CD8-positive, alpha-beta T cell (primary cell): ENCODE measurements at regions of chr17 and their contacts with region 1.

Region 1: DNA sequence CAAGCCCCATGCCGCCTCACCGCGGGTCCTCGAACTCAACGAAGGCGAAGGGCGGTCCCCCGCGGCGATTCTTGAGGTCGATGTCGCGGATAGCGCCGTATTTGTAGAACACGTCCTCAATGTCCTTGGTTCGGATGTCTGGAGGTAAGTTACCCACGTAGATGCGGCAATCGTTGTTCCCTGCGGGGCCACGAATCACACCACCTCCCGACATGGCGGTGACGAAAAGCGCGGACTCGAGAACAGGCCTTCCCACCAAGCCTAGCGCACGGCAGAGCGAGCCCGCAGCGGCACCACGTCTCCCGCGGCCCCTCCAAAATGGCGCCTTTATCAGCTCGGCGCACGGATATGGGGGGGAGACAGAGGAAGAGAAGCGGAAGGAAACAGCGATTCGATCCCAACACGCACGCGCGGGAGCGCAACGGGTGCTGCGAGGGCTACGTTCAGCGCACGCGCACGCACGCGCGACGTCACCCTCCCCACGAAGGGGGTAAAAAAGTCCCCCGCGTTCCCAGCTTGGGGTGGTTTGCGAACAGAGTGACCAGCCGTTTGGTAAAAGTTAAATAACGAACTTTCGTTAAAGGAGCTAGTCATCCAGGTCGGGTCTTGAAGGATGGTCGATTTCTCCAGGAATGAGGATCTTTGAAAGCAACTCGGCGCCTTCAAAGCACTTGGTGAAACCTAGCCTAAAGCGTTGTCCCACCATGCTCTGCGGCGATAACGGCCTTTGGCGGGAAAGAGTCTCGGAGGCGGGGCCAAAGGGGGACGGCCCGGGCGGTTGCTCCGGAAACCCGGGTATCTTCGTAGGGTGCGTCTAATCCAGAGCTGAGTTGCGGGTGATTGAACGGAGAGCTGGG is at the start of gene SRSF1:
- DNase-seq: peak; percentile 93 to 100 (median 98)
- ATAC-seq: peak; percentile 86
- H3K4me3 ChIP-seq: peak within 1 kb of the TSS; percentile 90 to 100
- H3K4me3 Mint-ChIP-seq: peak within 1 kb of the TSS; percentile 100
- H3K27ac ChIP-seq: peak within 1 kb of the TSS; percentile 85 to 97
- H3K27ac Mint-ChIP-seq: peak within 1 kb of the TSS; percentile 100
- H3K4me1 ChIP-seq: peaks cover 36% of the 10 kb centered on the region
- H3K4me1 Mint-ChIP-seq: peaks cover 55% of the 10 kb centered on the region
- H3K27me3 ChIP-seq: no peaks in the 10 kb centered on the region
- H3K27me3 Mint-ChIP-seq: no peaks in the 10 kb centered on the region
- CTCF ChIP-seq: no peak
- total RNA-seq, gene SRSF1: 79.2 to 94.1 TPM

Region 2: DNA sequence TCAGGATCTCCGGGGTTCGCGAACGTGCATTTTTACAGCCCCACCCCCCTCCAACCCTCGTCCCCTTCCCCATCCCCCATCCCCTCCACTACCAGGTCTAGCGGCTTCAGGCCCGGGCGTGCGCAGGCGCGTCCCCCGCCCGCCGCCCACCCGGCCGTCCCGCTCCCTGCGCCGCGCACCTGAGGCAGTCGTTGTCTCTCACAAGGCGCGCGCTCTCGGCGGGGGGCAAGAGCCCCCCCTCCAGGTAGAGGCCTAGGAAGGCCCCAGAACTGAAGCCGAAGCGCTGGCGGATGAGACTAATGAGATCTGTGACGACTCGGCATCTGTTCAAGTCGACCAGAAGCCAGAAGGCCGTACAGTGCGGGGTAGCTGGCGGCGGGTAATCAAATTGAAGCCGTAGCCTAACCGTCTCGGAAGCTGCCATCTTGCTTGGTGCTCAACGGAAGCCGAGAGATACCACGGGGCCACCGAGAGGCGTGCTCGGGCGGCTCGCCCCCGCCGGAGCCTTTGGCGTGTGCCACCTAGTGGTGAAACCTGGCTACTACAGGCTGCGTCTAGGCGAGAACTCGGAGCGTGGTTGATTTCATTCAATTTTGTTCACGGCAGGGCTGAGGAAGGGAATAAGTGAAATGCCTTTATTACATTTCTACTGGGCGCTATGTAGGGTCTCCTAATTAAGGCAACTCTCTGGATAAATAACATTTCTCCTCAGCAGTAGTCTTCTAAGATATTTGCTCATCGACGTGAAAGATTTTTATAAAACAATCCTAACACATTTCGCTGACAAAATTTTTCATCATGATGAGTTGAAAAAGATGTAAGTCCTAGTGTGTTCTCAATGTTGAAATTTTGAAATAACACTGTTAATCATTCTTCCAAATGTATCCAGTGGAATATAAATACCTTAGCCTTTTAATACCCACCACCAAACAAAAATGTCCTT is 1046.3 kb before region 1 on chr17 and contains the start of gene COIL:
- CTCF ChIA-PET with region 1: no interaction called
- POLR2A ChIA-PET with region 1: no interaction called
- intact Hi-C with region 1: loop called (anchors 10 kb)
- DNase-seq: peak; percentile 85 to 96 (median 93)
- ATAC-seq: peak; percentile 98
- H3K4me3 ChIP-seq: peak within 1 kb of the TSS; percentile 65 to 89
- H3K4me3 Mint-ChIP-seq: peak within 1 kb of the TSS; percentile 89
- H3K27ac ChIP-seq: peak within 1 kb of the TSS; percentile 78 to 79
- H3K27ac Mint-ChIP-seq: peak within 1 kb of the TSS; percentile 96
- H3K4me1 ChIP-seq: peaks cover 22% of the 10 kb centered on the region
- H3K4me1 Mint-ChIP-seq: peaks cover 25% of the 10 kb centered on the region
- H3K27me3 ChIP-seq: no peaks in the 10 kb centered on the region
- H3K27me3 Mint-ChIP-seq: no peaks in the 10 kb centered on the region
- CTCF ChIP-seq: peak; percentile 99
- total RNA-seq, gene COIL: 24.1 to 24.3 TPM

Region 3: GRCh38 chr17:57849874-57850754 is 157.0 kb before region 1 on chr17 and contains the start of gene MRPS23:
- CTCF ChIA-PET with region 1: interaction called, 102 read pairs
- POLR2A ChIA-PET with region 1: interaction called, 16 read pairs
- intact Hi-C with region 1: loop called (anchors 1 kb)
- DNase-seq: peak; percentile 91 to 99 (median 95)
- ATAC-seq: peak; percentile 94
- H3K4me3 ChIP-seq: peak within 1 kb of the TSS; percentile 74 to 82
- H3K4me3 Mint-ChIP-seq: peak within 1 kb of the TSS; percentile 95
- H3K27ac ChIP-seq: peak within 1 kb of the TSS; percentile 88 to 91
- H3K27ac Mint-ChIP-seq: peak within 1 kb of the TSS; percentile 100
- H3K4me1 ChIP-seq: peaks cover 32% of the 10 kb centered on the region
- H3K4me1 Mint-ChIP-seq: peaks cover 44% of the 10 kb centered on the region
- H3K27me3 ChIP-seq: no peaks in the 10 kb centered on the region
- H3K27me3 Mint-ChIP-seq: no peaks in the 10 kb centered on the region
- CTCF ChIP-seq: no peak
- total RNA-seq, gene MRPS23: 16.2 to 17.2 TPM

Region 4: GRCh38 chr17:57927048-57927723 is 80.0 kb before region 1 on chr17:
- CTCF ChIA-PET with region 1: no interaction called
- POLR2A ChIA-PET with region 1: no interaction called
- intact Hi-C with region 1: no loop called
- DNase-seq: no peak
- ATAC-seq: no peak
- H3K4me3 ChIP-seq: no peak overlapping the region
- H3K4me3 Mint-ChIP-seq: no peak overlapping the region
- H3K27ac ChIP-seq: no peak overlapping the region
- H3K27ac Mint-ChIP-seq: no peak overlapping the region
- H3K4me1 ChIP-seq: no peaks in the 10 kb centered on the region
- H3K4me1 Mint-ChIP-seq: peaks cover 6% of the 10 kb centered on the region
- H3K27me3 ChIP-seq: peaks cover 0 to 2% of the 10 kb centered on the region in 2 experiments
- H3K27me3 Mint-ChIP-seq: peaks cover 6% of the 10 kb centered on the region
- CTCF ChIP-seq: no peak

Region 5: DNA sequence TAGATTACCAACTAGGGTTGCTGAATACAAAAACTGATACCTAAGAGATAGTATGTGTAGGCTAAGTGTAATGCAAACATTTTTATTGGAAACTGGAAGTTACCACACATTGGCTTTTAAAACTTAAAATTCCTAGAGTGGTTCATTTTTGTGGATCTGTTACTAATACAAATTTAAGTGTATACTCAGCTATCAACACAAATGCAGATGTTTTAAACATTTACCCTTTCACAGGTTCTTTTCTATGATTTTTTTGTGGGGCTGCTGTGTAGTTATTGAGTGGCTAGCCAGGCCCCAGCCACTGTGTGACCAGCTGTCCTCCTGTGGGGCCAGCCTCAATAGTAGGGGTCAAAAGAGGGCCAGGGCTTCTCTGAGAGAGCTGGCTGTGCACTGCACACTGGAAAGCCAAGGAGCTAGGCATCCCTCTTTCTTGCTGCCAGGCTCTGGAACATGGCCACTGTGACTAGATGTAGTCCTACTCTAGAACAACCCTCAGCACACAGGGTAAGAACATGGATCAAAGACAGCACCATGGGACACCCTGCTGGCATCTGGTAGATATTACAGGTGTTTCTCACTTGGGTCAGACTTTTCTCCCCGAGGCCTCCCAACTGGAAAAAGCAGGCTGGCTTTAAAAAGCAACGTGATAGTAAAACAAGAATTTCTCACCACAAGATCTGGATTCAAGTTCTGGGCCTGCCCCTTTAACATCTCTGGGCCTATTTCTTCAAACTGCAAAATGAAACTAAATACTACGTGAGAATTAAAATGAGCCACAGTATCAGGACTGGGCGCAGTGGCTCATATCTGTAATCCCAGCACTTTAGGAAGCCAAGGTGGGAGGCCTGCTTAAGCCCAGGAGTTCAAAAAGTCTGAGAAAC is 11.8 kb before region 1 on chr17:
- CTCF ChIA-PET with region 1: interaction called, 53 read pairs
- POLR2A ChIA-PET with region 1: interaction called, 28 read pairs
- intact Hi-C with region 1: loop called in 1 of 2 experiments (anchors 1 kb)
- DNase-seq: peak; percentile 13 to 81 (median 51)
- ATAC-seq: peak; percentile 92
- H3K4me3 ChIP-seq: no peak overlapping the region
- H3K4me3 Mint-ChIP-seq: peak overlapping the region; percentile 1
- H3K27ac ChIP-seq: peak overlapping the region in 1 of 2 experiments; percentile 43
- H3K27ac Mint-ChIP-seq: peak overlapping the region; percentile 72
- H3K4me1 ChIP-seq: peaks cover 13% of the 10 kb centered on the region
- H3K4me1 Mint-ChIP-seq: peaks cover 46% of the 10 kb centered on the region
- H3K27me3 ChIP-seq: no peaks in the 10 kb centered on the region
- H3K27me3 Mint-ChIP-seq: no peaks in the 10 kb centered on the region
- CTCF ChIP-seq: peak; percentile 56

Region 6: GRCh38 chr17:58219001-58219788 is 212.0 kb after region 1 on chr17 and contains the start of gene MKS1:
- CTCF ChIA-PET with region 1: no interaction called
- POLR2A ChIA-PET with region 1: interaction called, 3 read pairs
- intact Hi-C with region 1: loop called (anchors 1 to 2 kb)
- DNase-seq: peak; percentile 92 to 97 (median 95)
- ATAC-seq: peak; percentile 97
- H3K4me3 ChIP-seq: peak within 1 kb of the TSS; percentile 63 to 91
- H3K4me3 Mint-ChIP-seq: peak within 1 kb of the TSS; percentile 87
- H3K27ac ChIP-seq: peak within 1 kb of the TSS; percentile 82 to 90
- H3K27ac Mint-ChIP-seq: peak within 1 kb of the TSS; percentile 93
- H3K4me1 ChIP-seq: peaks cover 14% of the 10 kb centered on the region
- H3K4me1 Mint-ChIP-seq: peaks cover 23% of the 10 kb centered on the region
- H3K27me3 ChIP-seq: no peaks in the 10 kb centered on the region
- H3K27me3 Mint-ChIP-seq: peaks cover 2% of the 10 kb centered on the region
- CTCF ChIP-seq: peak; percentile 67
- total RNA-seq, gene MKS1: 4.6 to 4.9 TPM

Region 7: GRCh38 chr17:58352014-58352842 is 345.1 kb after region 1 on chr17 and contains the start of gene SUPT4H1:
- CTCF ChIA-PET with region 1: no interaction called
- POLR2A ChIA-PET with region 1: no interaction called
- intact Hi-C with region 1: loop called (anchors 2 to 5 kb)
- DNase-seq: peak; percentile 81 to 97 (median 91)
- ATAC-seq: peak; percentile 88
- H3K4me3 ChIP-seq: peak within 1 kb of the TSS; percentile 69 to 70
- H3K4me3 Mint-ChIP-seq: peak within 1 kb of the TSS; percentile 100
- H3K27ac ChIP-seq: peak within 1 kb of the TSS; percentile 75 to 81
- H3K27ac Mint-ChIP-seq: peak within 1 kb of the TSS; percentile 100
- H3K4me1 ChIP-seq: peaks cover 46% of the 10 kb centered on the region
- H3K4me1 Mint-ChIP-seq: peaks cover 60% of the 10 kb centered on the region
- H3K27me3 ChIP-seq: no peaks in the 10 kb centered on the region
- H3K27me3 Mint-ChIP-seq: no peaks in the 10 kb centered on the region
- CTCF ChIP-seq: no peak
- total RNA-seq, gene SUPT4H1: 45.2 to 59.7 TPM

Region 8: DNA sequence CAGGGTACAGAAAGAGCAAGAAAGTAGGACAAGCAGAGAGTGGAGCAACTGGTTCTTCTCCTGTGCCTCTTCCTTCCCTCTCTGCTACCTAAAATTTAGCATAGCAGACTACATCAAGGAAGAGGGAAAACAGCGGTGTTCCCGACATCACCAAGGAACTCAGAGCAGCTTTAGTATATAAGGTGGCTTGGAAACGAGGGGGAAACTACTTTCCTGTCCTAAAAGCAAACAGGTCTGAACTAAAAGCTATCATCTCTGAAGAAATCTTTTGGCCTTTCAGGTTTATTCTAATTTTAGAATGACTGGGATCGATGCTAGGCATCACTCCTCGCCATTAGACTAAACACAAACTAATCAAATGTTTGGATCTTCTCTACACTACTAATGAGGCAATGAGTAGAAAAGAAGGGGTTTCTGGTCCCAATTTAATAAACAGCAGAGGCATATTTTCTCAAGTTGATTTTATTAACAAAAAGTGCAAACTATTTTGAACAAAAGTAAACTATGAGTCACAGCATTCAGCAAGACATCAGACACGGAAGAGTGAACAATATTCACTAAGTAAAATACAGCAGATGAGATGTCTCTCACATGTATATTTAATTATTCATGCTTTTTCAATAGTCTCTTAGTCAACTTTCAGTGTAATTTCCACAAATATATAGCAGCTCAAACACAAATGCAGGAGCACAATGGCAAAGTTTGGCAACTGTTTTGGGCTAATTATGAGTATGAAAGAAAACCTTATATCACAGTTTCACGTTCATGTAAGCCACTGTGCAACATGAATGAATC is 990.8 kb after region 1 on chr17:
- CTCF ChIA-PET with region 1: no interaction called
- POLR2A ChIA-PET with region 1: no interaction called
- intact Hi-C with region 1: loop called in 1 of 2 experiments (anchors 5 kb)
- DNase-seq: no peak
- ATAC-seq: no peak
- H3K4me3 ChIP-seq: no peak overlapping the region
- H3K4me3 Mint-ChIP-seq: no peak overlapping the region
- H3K27ac ChIP-seq: no peak overlapping the region
- H3K27ac Mint-ChIP-seq: peak overlapping the region; percentile 53
- H3K4me1 ChIP-seq: peaks cover 9% of the 10 kb centered on the region
- H3K4me1 Mint-ChIP-seq: peaks cover 8% of the 10 kb centered on the region
- H3K27me3 ChIP-seq: no peaks in the 10 kb centered on the region
- H3K27me3 Mint-ChIP-seq: no peaks in the 10 kb centered on the region
- CTCF ChIP-seq: no peak

Region 9: GRCh38 chr17:59074494-59074893 is 1067.3 kb after region 1 on chr17:
- CTCF ChIA-PET with region 1: no interaction called
- POLR2A ChIA-PET with region 1: no interaction called
- intact Hi-C with region 1: no loop called
- DNase-seq: no peak
- ATAC-seq: no peak
- H3K4me3 ChIP-seq: no peak overlapping the region
- H3K4me3 Mint-ChIP-seq: no peak overlapping the region
- H3K27ac ChIP-seq: no peak overlapping the region
- H3K27ac Mint-ChIP-seq: no peak overlapping the region
- H3K4me1 ChIP-seq: no peaks in the 10 kb centered on the region
- H3K4me1 Mint-ChIP-seq: no peaks in the 10 kb centered on the region
- H3K27me3 ChIP-seq: no peaks in the 10 kb centered on the region
- H3K27me3 Mint-ChIP-seq: no peaks in the 10 kb centered on the region
- CTCF ChIP-seq: no peak

Region 10: GRCh38 chr17:59186850-59187249 is 1179.7 kb after region 1 on chr17:
- CTCF ChIA-PET with region 1: no interaction called
- POLR2A ChIA-PET with region 1: no interaction called
- intact Hi-C with region 1: no loop called
- DNase-seq: no peak
- ATAC-seq: no peak
- H3K4me3 ChIP-seq: no peak overlapping the region
- H3K4me3 Mint-ChIP-seq: no peak overlapping the region
- H3K27ac ChIP-seq: no peak overlapping the region
- H3K27ac Mint-ChIP-seq: no peak overlapping the region
- H3K4me1 ChIP-seq: no peaks in the 10 kb centered on the region
- H3K4me1 Mint-ChIP-seq: no peaks in the 10 kb centered on the region
- H3K27me3 ChIP-seq: no peaks in the 10 kb centered on the region
- H3K27me3 Mint-ChIP-seq: no peaks in the 10 kb centered on the region
- CTCF ChIP-seq: no peak